ENCODE measurements at regions of chr11 and their contacts with region 1.

Region 1: GRCh38 chr11:77197626-77198320 is 69.7 kb downstream of the MYO7A start:
- DNase-seq: peak in 5 of 10 donors; percentile 2 to 56 (median 49)

Region 2: GRCh38 chr11:77547863-77548551 is 350.2 kb after region 1 on chr11:
- intact Hi-C with region 1: loop called (anchors 2 kb)
- DNase-seq: peak in 3 of 10 donors; percentile 14 to 37 (median 27)